ENCODE measurements at regions of chr1 and their contacts with region 1.

Region 1: DNA sequence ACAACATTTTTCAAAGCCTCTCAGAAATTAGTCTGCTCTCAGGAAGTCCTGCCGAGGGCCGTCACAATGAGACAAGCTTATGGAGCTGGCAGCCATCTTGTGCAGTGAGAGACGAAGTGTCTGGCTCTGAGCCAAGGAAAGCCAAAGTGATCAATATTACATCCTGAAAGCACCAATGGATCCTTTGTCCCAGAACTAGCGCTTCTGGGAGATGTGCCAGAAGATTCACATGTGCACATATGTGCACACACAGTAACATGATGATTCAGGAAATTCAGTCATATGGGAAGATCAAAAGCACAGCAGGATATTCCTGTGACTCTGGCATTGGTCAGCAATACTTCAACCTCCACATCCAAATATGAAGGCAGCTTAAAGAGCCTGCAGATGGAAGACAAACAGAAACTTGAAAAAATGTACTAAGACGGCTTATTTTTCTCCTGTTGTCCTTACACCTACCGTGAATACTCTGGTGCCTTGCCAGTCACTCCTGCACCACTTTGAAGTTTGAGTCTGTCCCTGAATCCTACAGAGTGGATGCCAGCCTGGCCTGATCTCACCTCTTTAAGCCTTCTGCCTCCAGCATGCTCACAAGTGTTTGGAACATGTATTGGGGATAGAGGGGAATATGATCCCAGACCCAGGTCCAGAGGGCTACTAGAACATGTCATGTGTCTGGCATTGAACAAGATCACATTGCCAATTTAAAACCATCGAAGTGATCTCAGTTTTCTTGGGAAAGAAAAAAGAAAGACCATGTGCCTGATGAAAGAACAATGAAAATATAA is 44.5 kb upstream of the PRRX1 start:
- DNase-seq: no peak
- ATAC-seq: no peak
- H3K4me3 ChIP-seq: no peak overlapping the region
- H3K27ac ChIP-seq: no peak overlapping the region
- H3K4me1 ChIP-seq: no peaks in the 10 kb centered on the region
- H3K27me3 ChIP-seq: no peaks in the 10 kb centered on the region; a peak in 1 of 4 replicates
- CTCF ChIP-seq: no peak
- EP300 ChIP-seq: no peak
- POLR2A ChIP-seq: no peak
- RAD21 ChIP-seq: no peak

Region 2: DNA sequence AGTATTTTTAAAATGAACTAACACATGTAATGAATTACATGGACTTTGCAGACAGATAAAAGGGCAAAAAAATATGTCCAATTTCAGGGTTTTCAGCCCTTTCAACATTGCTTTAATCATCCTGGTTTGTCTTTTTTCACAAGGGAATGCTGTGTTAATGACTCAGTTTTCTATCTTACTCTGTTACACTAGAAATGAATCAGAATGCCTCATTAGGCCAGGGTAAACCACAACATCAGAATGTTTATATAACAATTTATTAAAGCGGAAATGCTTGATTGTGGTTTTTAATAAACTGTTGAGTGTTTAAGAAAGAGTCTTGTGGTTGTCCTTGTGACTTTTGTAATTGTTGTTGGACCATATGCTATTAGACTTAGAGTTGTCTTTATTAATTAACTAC is 74.0 kb before region 1 on chr1:
- CTCF ChIA-PET with region 1: no interaction called
- POLR2A ChIA-PET with region 1: interaction called, 3 read pairs
- RAD21 ChIA-PET with region 1: interaction called, 5 read pairs
- SMC1A ChIA-PET with region 1: interaction called, 11 read pairs
- in situ Hi-C with region 1: no loop called
- intact Hi-C with region 1: no loop called
- DNase-seq: no peak
- ATAC-seq: peak; percentile 54
- H3K4me3 ChIP-seq: no peak overlapping the region
- H3K27ac ChIP-seq: no peak overlapping the region
- H3K4me1 ChIP-seq: no peaks in the 10 kb centered on the region
- H3K27me3 ChIP-seq: no peaks in the 10 kb centered on the region
- CTCF ChIP-seq: no peak
- EP300 ChIP-seq: peak; percentile 11 to 91; a peak in 2 of 4 replicates
- POLR2A ChIP-seq: no peak
- RAD21 ChIP-seq: no peak

Region 3: GRCh38 chr1:170593173-170594011 is 26.0 kb before region 1 on chr1:
- CTCF ChIA-PET with region 1: interaction called, 5 read pairs
- POLR2A ChIA-PET with region 1: interaction called, 6 read pairs
- RAD21 ChIA-PET with region 1: interaction called, 26 read pairs
- SMC1A ChIA-PET with region 1: interaction called, 93 read pairs
- in situ Hi-C with region 1: no loop called
- intact Hi-C with region 1: no loop called
- DNase-seq: no peak
- ATAC-seq: peak; percentile 55; the same call in 2 of the 3 replicates
- H3K4me3 ChIP-seq: no peak overlapping the region
- H3K27ac ChIP-seq: no peak overlapping the region
- H3K4me1 ChIP-seq: no peaks in the 10 kb centered on the region
- H3K27me3 ChIP-seq: no peaks in the 10 kb centered on the region
- CTCF ChIP-seq: 0 out of 6 replicates have a peak, but pooled peaks of 1 of the 3 experiments have one; percentile 1
- EP300 ChIP-seq: no peak
- POLR2A ChIP-seq: no peak
- RAD21 ChIP-seq: no peak

Region 4: GRCh38 chr1:170634293-170634692 is 14.9 kb after region 1 on chr1:
- CTCF ChIA-PET with region 1: interaction called, 5 read pairs
- POLR2A ChIA-PET with region 1: interaction called, 11 read pairs
- RAD21 ChIA-PET with region 1: interaction called, 19 read pairs
- SMC1A ChIA-PET with region 1: interaction called, 18 read pairs
- in situ Hi-C with region 1: no loop called
- intact Hi-C with region 1: no loop called
- DNase-seq: no peak
- ATAC-seq: peak; percentile 62
- H3K4me3 ChIP-seq: no peak overlapping the region
- H3K27ac ChIP-seq: no peak overlapping the region
- H3K4me1 ChIP-seq: no peaks in the 10 kb centered on the region
- H3K27me3 ChIP-seq: no peaks in the 10 kb centered on the region
- CTCF ChIP-seq: no peak
- EP300 ChIP-seq: no peak
- POLR2A ChIP-seq: no peak
- RAD21 ChIP-seq: no peak

Region 5: DNA sequence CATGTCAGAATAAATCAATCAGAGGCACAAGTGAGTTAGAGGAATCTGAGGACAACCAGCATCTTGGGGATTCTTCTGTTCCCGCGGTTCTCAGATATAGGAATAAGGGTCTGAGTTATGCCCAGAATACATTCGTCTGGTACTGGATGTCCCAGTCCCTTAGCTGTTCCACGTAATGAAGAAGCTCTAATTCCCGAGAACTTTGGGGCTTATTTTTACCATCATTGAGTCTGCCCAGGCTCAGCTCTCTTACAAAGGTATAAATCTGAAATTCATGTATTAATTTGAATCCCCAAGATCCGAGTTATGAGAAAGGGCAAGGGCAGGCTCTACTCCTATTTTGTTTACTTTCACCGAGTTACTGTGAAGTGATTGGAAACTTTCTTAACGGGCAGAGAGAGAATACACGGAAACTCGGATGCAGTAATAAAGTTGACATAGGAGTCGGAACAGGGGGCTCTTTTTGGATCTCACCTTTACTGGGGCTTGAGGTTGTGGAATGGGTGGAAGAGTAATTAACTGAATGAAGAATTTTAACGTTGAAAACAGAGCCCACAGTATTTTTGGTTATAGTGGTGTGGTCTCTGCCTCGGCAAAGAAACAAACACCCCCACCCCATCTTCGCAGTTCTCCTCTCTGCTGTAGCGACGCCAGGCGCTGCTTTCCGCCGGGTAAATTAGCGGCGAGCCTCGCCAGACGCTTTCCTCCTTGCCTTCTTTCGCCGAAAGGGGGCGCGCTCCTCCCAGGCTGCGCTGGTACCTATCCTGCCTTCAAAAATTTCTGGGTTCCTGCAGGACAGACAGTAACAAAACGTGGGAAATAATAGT is 51.6 kb after region 1 on chr1:
- CTCF ChIA-PET with region 1: interaction called, 3 read pairs
- POLR2A ChIA-PET with region 1: interaction called, 5 read pairs
- RAD21 ChIA-PET with region 1: no interaction called
- SMC1A ChIA-PET with region 1: interaction called, 14 read pairs
- in situ Hi-C with region 1: no loop called
- intact Hi-C with region 1: no loop called
- DNase-seq: no peak
- ATAC-seq: peak; percentile 74
- H3K4me3 ChIP-seq: no peak overlapping the region
- H3K27ac ChIP-seq: no peak overlapping the region
- H3K4me1 ChIP-seq: no peaks in the 10 kb centered on the region
- H3K27me3 ChIP-seq: peaks cover 3 to 13% of the 10 kb centered on the region in 2 experiments; a peak in 3 of 4 replicates
- CTCF ChIP-seq: peak; percentile 54 to 65 (median 55)
- EP300 ChIP-seq: no peak
- POLR2A ChIP-seq: no peak
- RAD21 ChIP-seq: peak; percentile 51